GM23248 (cell line): ENCODE measurements at regions of chr3 and their contacts with region 1.

Region 1: GRCh38 chr3:111080413-111080812 is 8.8 kb downstream of the NECTIN3 start:
- DNase-seq: peak; percentile 75
- H3K4me3 ChIP-seq: peak overlapping the region; percentile 54
- H3K27ac ChIP-seq: peak overlapping the region; percentile 60
- H3K4me1 ChIP-seq: peaks cover 52% of the 10 kb centered on the region
- H3K27me3 ChIP-seq: no peaks in the 10 kb centered on the region

Region 2: GRCh38 chr3:109784852-109785631 is 1295.4 kb before region 1 on chr3:
- in situ Hi-C with region 1: no loop called
- DNase-seq: no peak
- H3K4me3 ChIP-seq: no peak overlapping the region
- H3K27ac ChIP-seq: no peak overlapping the region
- H3K4me1 ChIP-seq: no peaks in the 10 kb centered on the region
- H3K27me3 ChIP-seq: no peaks in the 10 kb centered on the region

Region 3: GRCh38 chr3:111539351-111540331 is 459.2 kb after region 1 on chr3:
- in situ Hi-C with region 1: loop called (anchors 25 kb)
- DNase-seq: peak; percentile 72
- H3K4me3 ChIP-seq: 0 out of 2 replicates have a peak overlapping the region, but pooled peaks have one; percentile 16
- H3K27ac ChIP-seq: no peak overlapping the region
- H3K4me1 ChIP-seq: peaks cover 35% of the 10 kb centered on the region
- H3K27me3 ChIP-seq: no peaks in the 10 kb centered on the region